Activated CD4-positive, alpha-beta T cell treated with anti-CD3 and anti-CD28 coated beads, Interleukin-2, amount 10 ng/mL, durations not matched to agents 24 days and 14 days (primary cell): ENCODE measurements at regions of chr2 and their contacts with region 1.

Region 1: DNA sequence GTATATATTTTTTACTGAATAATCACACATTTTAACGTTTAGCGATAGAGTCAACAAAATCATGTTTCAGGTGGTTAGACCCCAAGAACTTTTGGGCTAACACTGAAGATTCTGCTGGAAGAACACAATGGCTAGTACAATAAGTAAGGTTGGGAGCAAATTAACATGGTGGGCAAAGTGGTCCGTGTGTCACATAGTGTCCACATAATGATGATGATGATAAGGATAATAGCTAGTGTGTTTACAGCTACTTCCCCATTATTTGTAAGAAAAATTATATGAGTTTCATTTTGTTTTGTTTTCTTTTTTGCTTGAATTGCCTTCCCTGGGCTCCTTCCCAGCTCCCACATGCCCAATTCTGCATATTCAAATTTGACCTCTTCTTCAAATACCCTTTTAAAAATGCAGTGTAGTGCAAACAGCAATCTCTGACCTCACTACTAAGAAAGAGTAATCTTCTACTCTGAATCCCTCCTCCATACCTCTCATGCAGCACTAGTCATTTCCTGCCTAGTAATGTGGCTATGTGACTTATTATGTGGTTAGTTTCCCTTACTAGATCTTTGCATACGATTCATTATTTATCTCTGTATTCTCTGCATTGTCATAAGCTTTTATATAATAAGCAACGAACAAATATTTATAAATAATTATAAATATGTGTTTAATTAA is 16.9 kb upstream of the VPS54 start:
- DNase-seq: peak; percentile 82
- H3K4me3 Mint-ChIP-seq: peak overlapping the region; percentile 22
- H3K27ac Mint-ChIP-seq: peak overlapping the region; percentile 76
- H3K4me1 Mint-ChIP-seq: peaks cover 42% of the 10 kb centered on the region
- H3K27me3 Mint-ChIP-seq: no peaks in the 10 kb centered on the region

Region 2: GRCh38 chr2:64018923-64019718 is 17.0 kb before region 1 on chr2 and contains the start of gene VPS54:
- intact Hi-C with region 1: loop called (anchors 1 kb)
- DNase-seq: peak; percentile 89
- H3K4me3 Mint-ChIP-seq: peak within 1 kb of the TSS; percentile 99
- H3K27ac Mint-ChIP-seq: peak within 1 kb of the TSS; percentile 99
- H3K4me1 Mint-ChIP-seq: peaks cover 38% of the 10 kb centered on the region
- H3K27me3 Mint-ChIP-seq: no peaks in the 10 kb centered on the region
- total RNA-seq, gene VPS54: 14.3 and 15.6 TPM in 2 replicates

Region 3: GRCh38 chr2:64067326-64067725 is 31.2 kb after region 1 on chr2:
- intact Hi-C with region 1: no loop called
- DNase-seq: no peak
- H3K4me3 Mint-ChIP-seq: no peak overlapping the region
- H3K27ac Mint-ChIP-seq: no peak overlapping the region
- H3K4me1 Mint-ChIP-seq: peaks cover 26% of the 10 kb centered on the region
- H3K27me3 Mint-ChIP-seq: no peaks in the 10 kb centered on the region

Region 4: GRCh38 chr2:64114063-64114911 is 78.1 kb after region 1 on chr2:
- intact Hi-C with region 1: loop called (anchors 1 kb)
- DNase-seq: peak; percentile 74
- H3K4me3 Mint-ChIP-seq: peak overlapping the region; percentile 66
- H3K27ac Mint-ChIP-seq: peak overlapping the region; percentile 86
- H3K4me1 Mint-ChIP-seq: peaks cover 50% of the 10 kb centered on the region
- H3K27me3 Mint-ChIP-seq: no peaks in the 10 kb centered on the region

Region 5: GRCh38 chr2:64133828-64134227 is 97.7 kb after region 1 on chr2:
- intact Hi-C with region 1: loop called (anchors 2 kb)
- DNase-seq: no peak
- H3K4me3 Mint-ChIP-seq: peak overlapping the region; percentile 60
- H3K27ac Mint-ChIP-seq: peak overlapping the region; percentile 89
- H3K4me1 Mint-ChIP-seq: peaks cover 72% of the 10 kb centered on the region
- H3K27me3 Mint-ChIP-seq: no peaks in the 10 kb centered on the region